ENCODE measurements at regions of chrX and their contacts with region 1.

Region 1: DNA sequence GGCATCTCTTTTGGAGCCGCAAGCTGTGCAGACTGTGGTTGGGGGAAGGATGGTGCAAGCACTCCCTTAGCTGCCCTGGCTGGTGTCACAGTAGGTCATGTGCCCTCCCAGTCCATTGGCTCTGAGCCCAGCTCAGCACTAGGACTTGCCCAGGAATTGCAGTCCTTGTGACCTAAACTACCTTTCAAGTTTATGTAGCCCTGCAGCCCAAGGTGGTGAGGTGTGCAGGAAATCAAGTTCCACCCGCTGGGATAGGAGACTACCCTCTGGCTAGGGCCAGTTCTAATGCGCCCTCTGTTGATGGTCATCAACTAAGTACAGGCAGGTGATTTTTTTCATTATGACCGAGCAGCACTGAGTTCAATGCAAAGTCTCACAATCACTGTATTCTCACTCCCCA is 335.2 kb downstream of the UBE2NL start:
- DNase-seq: peak; percentile 10
- H3K4me3 ChIP-seq: no peak overlapping the region
- H3K27ac ChIP-seq: no peak overlapping the region
- H3K4me1 ChIP-seq: no peaks in the 10 kb centered on the region
- H3K27me3 ChIP-seq: no peaks in the 10 kb centered on the region
- CTCF ChIP-seq: peak in 1 of 2 donors; percentile 44

Region 2: GRCh38 chrX:143669395-143669794 is 549.6 kb before region 1 on chrX:
- CTCF ChIA-PET with region 1: no interaction called
- dilution Hi-C with region 1: no loop called
- in situ Hi-C with region 1: no loop called
- intact Hi-C with region 1: loop called (anchors 5 kb)
- DNase-seq: peak; percentile 24
- H3K4me3 ChIP-seq: no peak overlapping the region
- H3K27ac ChIP-seq: no peak overlapping the region
- H3K4me1 ChIP-seq: no peaks in the 10 kb centered on the region
- H3K27me3 ChIP-seq: no peaks in the 10 kb centered on the region
- CTCF ChIP-seq: peak; percentile 18 to 43

Region 3: DNA sequence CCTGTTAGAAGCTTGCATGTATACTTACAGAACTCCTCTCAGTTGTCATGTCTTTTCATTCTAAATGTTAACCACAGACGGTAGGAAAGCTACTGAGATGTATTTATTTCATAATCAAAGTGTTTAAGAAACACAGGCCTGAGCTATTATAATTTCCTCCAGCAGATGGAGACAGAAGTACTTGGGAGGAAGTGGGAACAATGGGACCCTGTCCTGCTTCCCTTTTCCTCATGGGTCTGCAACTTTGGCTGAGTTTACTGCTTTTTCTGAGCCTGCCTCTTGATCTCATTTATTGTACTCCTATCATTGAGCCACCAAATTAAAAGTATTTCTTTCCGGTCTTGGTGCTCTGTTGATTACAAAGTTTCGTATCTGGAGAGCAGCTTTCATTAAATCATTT is 430.8 kb before region 1 on chrX:
- CTCF ChIA-PET with region 1: no interaction called
- dilution Hi-C with region 1: no loop called
- in situ Hi-C with region 1: no loop called
- intact Hi-C with region 1: loop called (anchors 5 kb)
- DNase-seq: peak; percentile 21
- H3K4me3 ChIP-seq: no peak overlapping the region
- H3K27ac ChIP-seq: no peak overlapping the region
- H3K4me1 ChIP-seq: no peaks in the 10 kb centered on the region
- H3K27me3 ChIP-seq: no peaks in the 10 kb centered on the region
- CTCF ChIP-seq: peak; percentile 65 to 71

Region 4: DNA sequence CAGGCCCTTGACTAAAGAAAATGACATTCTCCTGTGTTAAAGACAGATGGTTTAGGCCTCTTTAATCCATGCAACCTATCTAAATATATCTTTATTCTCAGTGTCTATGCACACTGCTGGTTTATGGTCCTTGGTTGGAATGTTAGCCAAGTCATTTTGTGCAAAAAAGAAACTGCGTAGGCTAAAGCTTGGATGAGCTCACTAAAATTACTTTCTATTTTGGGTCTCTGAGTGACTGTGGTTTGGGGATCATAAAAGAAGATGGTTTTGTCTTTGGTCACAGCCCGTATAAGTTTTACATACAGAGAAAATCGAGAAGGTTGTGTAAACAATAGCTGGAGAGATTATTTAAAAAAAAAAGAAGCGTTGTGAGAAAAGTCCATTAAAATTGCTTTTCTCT is 108.5 kb after region 1 on chrX:
- CTCF ChIA-PET with region 1: no interaction called
- dilution Hi-C with region 1: no loop called
- in situ Hi-C with region 1: no loop called
- intact Hi-C with region 1: no loop called
- DNase-seq: peak; percentile 3
- H3K4me3 ChIP-seq: no peak overlapping the region
- H3K27ac ChIP-seq: no peak overlapping the region
- H3K4me1 ChIP-seq: no peaks in the 10 kb centered on the region
- H3K27me3 ChIP-seq: no peaks in the 10 kb centered on the region
- CTCF ChIP-seq: no peak

Region 5: DNA sequence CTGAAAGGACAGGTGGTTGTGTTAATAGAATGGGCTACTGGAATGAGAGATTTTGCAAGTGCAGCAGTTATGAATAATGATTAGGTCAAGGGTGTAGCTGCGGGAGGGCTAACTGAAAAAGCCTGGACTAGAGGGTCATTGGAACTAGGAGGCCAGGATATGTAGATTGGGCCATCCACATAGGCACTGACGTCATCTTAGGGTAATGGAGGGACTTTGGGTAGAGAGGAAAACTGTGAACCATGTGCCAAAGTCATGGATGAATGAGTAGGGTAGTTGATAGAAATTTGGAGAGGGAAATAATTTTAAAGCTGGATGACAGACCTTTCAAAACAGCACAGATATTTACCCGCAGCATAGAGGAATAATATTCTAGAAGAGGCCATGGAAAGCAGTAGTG is 1475.0 kb after region 1 on chrX:
- CTCF ChIA-PET with region 1: no interaction called
- dilution Hi-C with region 1: no loop called
- in situ Hi-C with region 1: no loop called
- intact Hi-C with region 1: no loop called
- DNase-seq: no peak
- H3K4me3 ChIP-seq: no peak overlapping the region
- H3K27ac ChIP-seq: no peak overlapping the region
- H3K4me1 ChIP-seq: no peaks in the 10 kb centered on the region
- H3K27me3 ChIP-seq: no peaks in the 10 kb centered on the region
- CTCF ChIP-seq: no peak